Activated CD4-positive, alpha-beta memory T cell treated with anti-CD3 and anti-CD28 coated beads for 36 hours (primary cell): ENCODE measurements at regions of chr16 and their contacts with region 1.

Region 1: GRCh38 chr16:67159593-67160406 is at the starts of genes FBXL8 and TRADD:
- DNase-seq: peak; percentile 86
- H3K4me3 Mint-ChIP-seq: peak within 1 kb of the TSS; percentile 93
- H3K27ac Mint-ChIP-seq: peak within 1 kb of the TSS; percentile 95
- H3K4me1 Mint-ChIP-seq: peaks cover 57% of the 10 kb centered on the region
- H3K27me3 Mint-ChIP-seq: peaks cover 13% of the 10 kb centered on the region
- total RNA-seq, gene FBXL8: 24.1 to 25.7 TPM
- total RNA-seq, gene TRADD: 41.7 to 43.2 TPM

Region 2: DNA sequence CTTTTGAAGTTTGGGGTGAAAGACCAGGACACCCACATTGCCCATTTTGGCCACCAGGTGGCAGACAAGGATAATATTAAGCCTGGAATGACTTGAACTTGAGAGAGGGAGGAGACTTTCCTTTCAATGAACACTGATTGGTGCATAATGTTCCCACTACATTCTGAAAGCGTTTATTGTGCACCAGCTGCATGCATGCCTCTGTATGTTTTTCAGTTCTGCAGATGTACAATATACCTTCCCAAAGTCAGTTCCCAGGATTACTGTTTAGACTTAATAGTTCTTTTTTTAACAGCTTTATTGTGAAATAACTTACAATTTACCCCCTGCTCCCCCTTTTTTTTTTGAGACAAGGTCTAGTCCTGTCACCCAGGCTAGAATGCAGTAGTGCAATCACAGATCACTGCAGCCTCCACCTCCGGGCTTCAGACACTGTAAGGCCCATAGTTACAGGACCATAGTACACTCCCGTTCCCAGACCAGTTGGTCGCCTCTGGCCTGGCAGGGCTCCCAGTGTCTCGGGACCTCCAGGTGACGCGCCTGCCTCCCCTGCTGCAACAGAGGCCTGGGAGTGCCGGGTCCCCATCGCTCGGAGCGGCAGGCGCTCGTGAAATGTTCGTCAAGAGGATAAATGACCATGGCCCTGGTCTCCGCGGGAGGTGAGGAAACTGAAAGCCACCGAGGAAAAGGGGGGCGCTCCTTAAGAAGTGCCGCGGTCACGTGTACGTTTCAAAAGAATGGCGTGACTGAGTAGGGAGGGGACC is 212.3 kb before region 1 on chr16:
- CTCF ChIA-PET with region 1: interaction called, 31 read pairs
- POLR2A ChIA-PET with region 1: no interaction called
- intact Hi-C with region 1: loop called (anchors 2 kb)
- DNase-seq: peak; percentile 91
- H3K4me3 Mint-ChIP-seq: peak overlapping the region; percentile 72
- H3K27ac Mint-ChIP-seq: no peak overlapping the region
- H3K4me1 Mint-ChIP-seq: peaks cover 19% of the 10 kb centered on the region
- H3K27me3 Mint-ChIP-seq: peaks cover 31% of the 10 kb centered on the region

Region 3: GRCh38 chr16:66977341-66978113 is 182.3 kb before region 1 on chr16:
- CTCF ChIA-PET with region 1: interaction called, 45 read pairs
- POLR2A ChIA-PET with region 1: interaction called, 5 read pairs
- intact Hi-C with region 1: loop called (anchors 1 kb)
- DNase-seq: peak; percentile 95
- H3K4me3 Mint-ChIP-seq: no peak overlapping the region
- H3K27ac Mint-ChIP-seq: peak overlapping the region; percentile 54
- H3K4me1 Mint-ChIP-seq: peaks cover 50% of the 10 kb centered on the region
- H3K27me3 Mint-ChIP-seq: no peaks in the 10 kb centered on the region

Region 4: DNA sequence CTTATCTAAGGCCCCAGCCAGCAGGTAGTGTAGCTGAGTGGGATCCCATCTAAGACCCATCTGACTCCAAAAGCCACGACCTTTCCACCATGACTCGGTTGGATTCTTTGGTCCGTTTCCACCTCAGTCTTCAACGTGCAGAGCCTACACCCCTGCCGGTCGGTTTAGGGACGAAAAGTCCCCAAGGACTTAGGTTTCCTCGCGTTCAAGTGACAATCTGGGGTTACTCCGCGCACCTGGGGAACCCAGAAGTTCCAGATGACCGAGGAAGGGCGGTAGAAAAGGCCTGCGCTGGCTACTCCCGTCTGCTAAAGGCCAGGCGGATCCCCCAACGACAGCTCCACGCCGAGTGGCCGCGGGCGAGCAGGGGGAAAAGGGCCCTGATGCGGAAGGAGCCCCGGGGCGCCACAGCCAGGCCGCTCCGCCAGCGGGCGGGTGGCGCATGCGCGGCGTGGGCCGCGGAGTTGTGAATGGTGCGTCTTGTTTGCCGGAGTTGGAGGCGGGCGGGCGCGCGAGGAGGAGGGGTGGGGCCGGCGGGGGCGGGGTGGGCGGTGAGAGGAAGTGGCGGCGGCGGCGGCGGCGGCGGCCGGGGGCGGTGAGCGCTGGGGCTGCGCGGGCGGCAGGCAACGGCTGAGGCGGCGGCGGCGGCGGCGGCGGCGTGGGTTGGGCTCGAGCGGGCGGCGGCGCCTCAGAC is 131.1 kb before region 1 on chr16 and contains the start of gene CBFB:
- CTCF ChIA-PET with region 1: interaction called, 35 read pairs
- POLR2A ChIA-PET with region 1: interaction called, 8 read pairs
- intact Hi-C with region 1: no loop called
- DNase-seq: peak; percentile 94
- H3K4me3 Mint-ChIP-seq: peak within 1 kb of the TSS; percentile 89
- H3K27ac Mint-ChIP-seq: peak within 1 kb of the TSS; percentile 93
- H3K4me1 Mint-ChIP-seq: peaks cover 39% of the 10 kb centered on the region
- H3K27me3 Mint-ChIP-seq: no peaks in the 10 kb centered on the region
- total RNA-seq, gene CBFB: 155 to 163 TPM

Region 5: GRCh38 chr16:67084345-67085028 is 75.3 kb before region 1 on chr16:
- CTCF ChIA-PET with region 1: no interaction called
- POLR2A ChIA-PET with region 1: no interaction called
- intact Hi-C with region 1: no loop called
- DNase-seq: no peak
- H3K4me3 Mint-ChIP-seq: no peak overlapping the region
- H3K27ac Mint-ChIP-seq: no peak overlapping the region
- H3K4me1 Mint-ChIP-seq: peaks cover 5% of the 10 kb centered on the region
- H3K27me3 Mint-ChIP-seq: no peaks in the 10 kb centered on the region

Region 6: DNA sequence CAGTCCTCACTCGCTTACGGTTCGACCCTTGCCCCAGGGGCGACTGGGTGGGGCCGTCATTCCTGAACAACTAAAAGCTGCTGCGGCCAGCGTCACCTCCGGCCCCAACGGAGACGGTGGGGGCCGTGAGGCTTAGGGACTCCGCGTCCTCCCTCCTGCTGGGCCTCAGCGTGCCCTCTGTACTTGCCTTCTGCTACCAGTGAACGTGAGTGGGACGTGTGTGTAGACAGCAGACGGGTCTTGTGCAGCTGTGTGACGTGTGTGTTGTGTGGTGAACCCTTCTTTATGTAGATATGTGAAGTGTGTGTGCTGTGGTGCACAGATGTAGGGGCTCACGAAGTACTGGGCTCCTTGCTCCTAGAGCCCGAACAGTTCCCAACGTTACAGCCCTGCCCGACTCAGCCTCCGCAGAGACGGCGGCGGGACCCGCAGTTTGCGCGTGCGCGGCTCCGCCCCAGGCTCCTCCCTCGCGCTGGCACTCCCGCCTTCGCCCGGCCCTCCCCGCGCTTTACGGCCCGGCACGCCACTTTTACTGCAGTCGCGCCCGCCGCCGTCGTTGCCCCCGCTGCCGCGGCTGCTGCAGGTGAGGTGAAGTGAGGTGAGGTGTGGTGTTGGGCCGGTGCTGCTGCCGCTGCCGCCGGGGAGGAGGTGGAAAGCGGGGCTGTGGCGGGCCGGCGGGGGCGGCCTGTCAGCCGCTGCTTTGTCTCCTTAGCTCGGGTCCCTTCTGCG is 50.2 kb before region 1 on chr16 and contains the start of gene PHAF1:
- CTCF ChIA-PET with region 1: interaction called, 13 read pairs
- POLR2A ChIA-PET with region 1: interaction called, 6 read pairs
- intact Hi-C with region 1: loop called (anchors 5 kb)
- DNase-seq: peak; percentile 97
- H3K4me3 Mint-ChIP-seq: peak within 1 kb of the TSS; percentile 92
- H3K27ac Mint-ChIP-seq: peak within 1 kb of the TSS; percentile 80
- H3K4me1 Mint-ChIP-seq: peaks cover 32% of the 10 kb centered on the region
- H3K27me3 Mint-ChIP-seq: no peaks in the 10 kb centered on the region
- total RNA-seq, gene PHAF1: 11.4 to 12.3 TPM

Region 7: GRCh38 chr16:67246934-67247697 is 87.3 kb after region 1 on chr16 and contains the start of gene FHOD1:
- CTCF ChIA-PET with region 1: interaction called, 3 read pairs
- POLR2A ChIA-PET with region 1: no interaction called
- intact Hi-C with region 1: loop called (anchors 2 kb)
- DNase-seq: peak; percentile 99
- H3K4me3 Mint-ChIP-seq: peak within 1 kb of the TSS; percentile 90
- H3K27ac Mint-ChIP-seq: peak within 1 kb of the TSS; percentile 86
- H3K4me1 Mint-ChIP-seq: peaks cover 47% of the 10 kb centered on the region
- H3K27me3 Mint-ChIP-seq: peaks cover 1% of the 10 kb centered on the region
- total RNA-seq, gene FHOD1: 96.3 to 111 TPM

Region 8: DNA sequence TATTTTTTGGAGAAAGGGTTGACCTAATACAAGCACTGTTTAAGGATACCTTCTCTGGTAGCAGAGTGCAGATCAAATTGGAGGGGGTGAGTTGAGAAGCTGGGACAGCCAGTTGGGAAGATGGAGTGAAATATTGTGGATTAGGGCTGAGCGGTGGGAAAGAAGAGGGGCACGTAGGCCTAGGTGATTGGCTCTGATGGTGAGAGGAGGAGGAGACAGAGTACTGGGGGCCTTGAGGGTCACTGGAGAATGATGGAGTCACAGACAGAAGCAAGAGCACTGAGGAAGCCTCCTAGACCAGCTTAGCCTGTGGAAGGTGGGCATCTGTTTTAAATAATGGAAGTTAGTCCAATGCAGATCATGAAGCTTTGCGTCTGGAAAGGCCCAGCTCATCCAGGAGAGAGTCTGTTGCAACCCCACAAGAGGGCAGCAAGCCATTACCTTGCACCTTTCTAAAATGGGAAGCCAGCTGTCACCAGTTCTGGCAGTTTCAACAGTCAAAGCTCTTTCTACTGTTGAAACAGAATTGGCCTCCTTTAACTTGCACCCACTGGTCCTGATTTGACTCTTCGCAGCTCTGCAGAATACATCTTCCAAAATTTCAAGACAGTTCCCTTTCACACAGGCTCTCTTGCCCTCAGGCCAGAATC is 100.8 kb after region 1 on chr16:
- CTCF ChIA-PET with region 1: no interaction called
- POLR2A ChIA-PET with region 1: no interaction called
- intact Hi-C with region 1: no loop called
- DNase-seq: peak; percentile 55
- H3K4me3 Mint-ChIP-seq: no peak overlapping the region
- H3K27ac Mint-ChIP-seq: no peak overlapping the region
- H3K4me1 Mint-ChIP-seq: peaks cover 3% of the 10 kb centered on the region
- H3K27me3 Mint-ChIP-seq: peaks cover 16% of the 10 kb centered on the region

Region 9: GRCh38 chr16:67372664-67373063 is 212.9 kb after region 1 on chr16:
- CTCF ChIA-PET with region 1: no interaction called
- POLR2A ChIA-PET with region 1: no interaction called
- intact Hi-C with region 1: no loop called
- DNase-seq: no peak
- H3K4me3 Mint-ChIP-seq: no peak overlapping the region
- H3K27ac Mint-ChIP-seq: no peak overlapping the region
- H3K4me1 Mint-ChIP-seq: no peaks in the 10 kb centered on the region
- H3K27me3 Mint-ChIP-seq: peaks cover 8% of the 10 kb centered on the region

Region 10: GRCh38 chr16:67571981-67572431 is 412.2 kb after region 1 on chr16:
- CTCF ChIA-PET with region 1: no interaction called
- POLR2A ChIA-PET with region 1: no interaction called
- intact Hi-C with region 1: no loop called
- DNase-seq: no peak
- H3K4me3 Mint-ChIP-seq: no peak overlapping the region
- H3K27ac Mint-ChIP-seq: no peak overlapping the region
- H3K4me1 Mint-ChIP-seq: peaks cover 16% of the 10 kb centered on the region
- H3K27me3 Mint-ChIP-seq: no peaks in the 10 kb centered on the region